ENCODE measurements at regions of chr11 and their contacts with region 1.

Region 1: GRCh38 chr11:10659339-10660216 is 34.0 kb downstream of the IRAG1 start:
- DNase-seq: peak in 1 of 2 donors; percentile 24
- H3K4me3 ChIP-seq: peak overlapping the region in 1 of 3 donors; percentile 15
- H3K27ac ChIP-seq: peak overlapping the region; percentile 67 to 87
- H3K4me1 ChIP-seq: peaks cover 0 to 8% of the 10 kb centered on the region in 2 donors
- H3K27me3 ChIP-seq: no peaks in the 10 kb centered on the region
- CTCF ChIP-seq: no peak
- POLR2A ChIP-seq: no peak

Region 2: DNA sequence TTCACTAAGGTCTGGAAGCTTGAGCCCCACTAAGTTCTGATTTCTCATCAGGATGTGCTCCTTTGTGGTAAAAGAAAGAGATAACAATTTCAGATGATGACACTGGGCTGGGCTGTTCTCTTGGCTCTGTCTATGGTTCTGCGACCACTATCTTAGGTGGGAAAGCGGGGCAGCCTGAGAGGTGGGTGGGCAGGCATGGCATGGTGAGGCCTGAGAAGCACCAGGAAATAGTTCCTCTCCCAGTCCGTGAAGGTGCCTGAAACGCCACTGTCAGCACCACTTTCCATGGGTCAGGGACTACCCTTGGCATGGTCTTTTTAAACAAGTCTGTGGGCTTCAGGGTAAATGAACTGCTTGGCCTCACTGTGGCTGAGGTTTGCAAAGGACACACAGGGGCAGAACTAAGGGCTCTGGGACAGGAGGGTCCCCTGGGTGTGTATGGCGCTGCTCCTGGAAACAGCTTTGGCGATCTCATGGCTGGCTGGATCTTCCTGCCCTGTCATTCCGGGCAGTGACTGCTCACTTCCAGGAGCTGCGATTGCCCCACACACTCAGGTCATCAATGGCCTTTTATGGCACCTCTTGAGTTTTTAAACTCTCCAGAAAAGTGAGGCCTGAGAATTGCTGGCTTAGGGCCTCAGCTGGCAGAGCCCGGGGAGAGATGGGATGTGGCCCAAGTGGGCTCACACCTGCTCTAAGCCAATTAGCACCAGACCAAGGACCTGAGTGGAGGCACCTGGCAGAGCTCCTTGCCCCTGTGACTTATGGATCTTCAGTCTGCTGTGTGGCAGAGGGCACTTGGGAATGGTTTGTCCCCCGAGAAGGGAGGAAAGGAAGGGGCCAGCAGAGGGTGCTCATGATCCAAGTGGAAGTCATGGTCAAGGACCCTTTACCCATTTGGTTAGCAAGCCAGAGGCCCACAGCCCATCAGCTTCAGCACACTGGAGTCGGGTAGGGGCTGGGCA is 35.5 kb before region 1 on chr11:
- intact Hi-C with region 1: no loop called
- DNase-seq: no peak
- H3K4me3 ChIP-seq: no peak overlapping the region
- H3K27ac ChIP-seq: peak overlapping the region in 1 of 2 donors; percentile 52
- H3K4me1 ChIP-seq: no peaks in the 10 kb centered on the region
- H3K27me3 ChIP-seq: no peaks in the 10 kb centered on the region
- CTCF ChIP-seq: peak in 1 of 3 donors; percentile 25
- POLR2A ChIP-seq: no peak

Region 3: DNA sequence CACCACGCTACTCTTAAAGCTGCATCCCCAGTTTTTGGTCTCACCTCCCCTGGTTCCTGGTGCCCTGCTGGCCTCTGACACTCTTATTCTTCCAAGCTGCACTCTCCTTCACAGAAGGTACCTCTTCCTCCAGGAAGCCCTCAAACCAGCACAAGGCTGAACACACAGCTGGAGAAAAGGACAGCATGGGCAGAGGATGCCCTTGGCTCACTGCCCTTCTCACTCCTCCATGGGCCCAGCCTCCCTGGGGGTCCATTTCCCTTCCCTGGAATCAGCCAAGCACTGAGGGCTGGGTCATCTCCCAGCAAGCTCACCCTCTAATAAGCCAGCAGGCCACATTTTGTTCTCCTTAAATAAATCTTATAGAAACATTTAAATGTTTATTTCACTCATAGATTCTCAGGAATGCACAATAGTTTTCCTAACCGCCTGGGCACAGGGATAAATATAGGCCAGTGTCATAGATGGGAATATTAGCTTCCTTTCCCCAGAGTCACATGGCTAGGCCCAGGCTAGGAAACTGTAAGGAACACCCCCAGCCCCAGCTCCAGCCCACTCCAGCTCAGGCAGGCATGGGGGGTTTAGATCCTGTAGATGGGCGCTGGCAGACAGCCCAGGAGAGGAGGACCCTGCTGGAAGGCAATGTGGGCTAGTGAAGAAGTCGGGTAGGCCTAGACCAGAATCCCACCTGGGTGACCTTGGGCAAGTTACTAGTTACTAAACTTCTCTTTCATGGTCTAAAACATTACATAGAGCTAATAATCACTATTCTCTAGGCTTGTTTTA is 17.5 kb before region 1 on chr11:
- intact Hi-C with region 1: loop called (anchors 1 kb)
- DNase-seq: no peak
- H3K4me3 ChIP-seq: no peak overlapping the region
- H3K27ac ChIP-seq: peak overlapping the region in 1 of 2 donors; percentile 41
- H3K4me1 ChIP-seq: no peaks in the 10 kb centered on the region
- H3K27me3 ChIP-seq: no peaks in the 10 kb centered on the region
- CTCF ChIP-seq: no peak
- POLR2A ChIP-seq: no peak

Region 4: GRCh38 chr11:10701982-10702381 is 42.4 kb after region 1 on chr11:
- intact Hi-C with region 1: no loop called
- DNase-seq: no peak
- H3K4me3 ChIP-seq: no peak overlapping the region
- H3K27ac ChIP-seq: no peak overlapping the region
- H3K4me1 ChIP-seq: no peaks in the 10 kb centered on the region
- H3K27me3 ChIP-seq: no peaks in the 10 kb centered on the region
- CTCF ChIP-seq: no peak
- POLR2A ChIP-seq: no peak